HAP-1 (cell line): ENCODE measurements at regions of chr2 and their contacts with region 1.

Region 1: GRCh38 chr2:159712143-159712928 is at the start of gene MARCHF7:
- DNase-seq: peak; percentile 93 to 99
- H3K4me3 ChIP-seq: peak within 1 kb of the TSS; percentile 100
- H3K4me1 ChIP-seq: peaks cover 19% of the 10 kb centered on the region
- H3K27me3 ChIP-seq: no peaks in the 10 kb centered on the region

Region 2: DNA sequence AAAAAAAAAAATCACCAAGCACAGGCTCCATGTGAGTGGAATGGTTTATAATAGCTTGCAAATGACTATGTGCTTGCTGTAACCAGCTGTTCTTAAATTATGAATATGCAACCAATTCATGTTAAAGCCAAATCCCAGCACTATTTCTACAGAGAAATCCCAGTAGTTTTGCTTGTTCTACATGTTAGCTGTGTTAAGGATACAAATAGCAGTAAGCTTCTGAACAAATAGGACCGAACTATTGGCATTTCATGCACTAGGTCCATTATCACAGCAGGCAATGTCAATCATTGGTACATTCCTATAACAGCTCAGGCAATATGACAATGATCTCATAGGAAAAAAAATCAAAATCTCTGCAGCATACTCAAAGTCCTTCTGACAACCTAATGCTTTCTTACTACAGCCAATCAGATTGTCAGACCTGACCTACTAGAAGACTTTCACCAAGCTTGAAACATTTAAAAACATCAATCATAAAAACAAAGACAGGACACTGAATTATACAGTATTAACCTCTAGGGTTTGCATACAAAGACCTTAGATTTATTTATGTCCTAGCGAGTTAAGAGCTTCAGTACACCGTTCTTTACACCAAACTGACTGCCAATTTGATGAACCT is 102.4 kb before region 1 on chr2:
- in situ Hi-C with region 1: loop called (anchors 5 kb)
- DNase-seq: no peak
- H3K4me3 ChIP-seq: no peak overlapping the region
- H3K4me1 ChIP-seq: peaks cover 50% of the 10 kb centered on the region
- H3K27me3 ChIP-seq: no peaks in the 10 kb centered on the region